SK-N-SH (cell line): ENCODE measurements at regions of chr12 and their contacts with region 1.

Region 1: GRCh38 chr12:95574799-95575452 is 23.6 kb upstream of the USP44 start:
- DNase-seq: peak; percentile 54
- H3K4me3 ChIP-seq: no peak overlapping the region; a peak in 1 of 4 replicates
- H3K27ac ChIP-seq: no peak overlapping the region
- H3K4me1 ChIP-seq: no peaks in the 10 kb centered on the region
- H3K27me3 ChIP-seq: no peaks in the 10 kb centered on the region; the same call in 1 of the 2 replicates
- CTCF ChIP-seq: peak; percentile 73
- EP300 ChIP-seq: no peak
- RAD21 ChIP-seq: peak; percentile 63

Region 2: GRCh38 chr12:95548539-95549391 is 26.2 kb before region 1 on chr12:
- CTCF ChIA-PET with region 1: interaction called, 10 read pairs
- POLR2A ChIA-PET with region 1: no interaction called
- DNase-seq: peak; percentile 98
- H3K4me3 ChIP-seq: peak overlapping the region; percentile 65 to 69
- H3K27ac ChIP-seq: peak overlapping the region in 1 of 2 experiments; percentile 62; a peak in 1 of 4 replicates
- H3K4me1 ChIP-seq: no peaks in the 10 kb centered on the region; a peak in 1 of 4 replicates
- H3K27me3 ChIP-seq: 0 out of 2 replicates have a peak, but pooled peaks cover 5% of the 10 kb centered on the region
- CTCF ChIP-seq: no peak
- EP300 ChIP-seq: no peak
- RAD21 ChIP-seq: no peak